ENCODE measurements at regions of chr1 and their contacts with region 1.

Region 1: GRCh38 chr1:1115786-1116700 is at the start of gene C1orf159:
- DNase-seq: peak; percentile 98
- H3K4me3 Mint-ChIP-seq: peak within 1 kb of the TSS; percentile 87
- H3K27ac Mint-ChIP-seq: peak within 1 kb of the TSS; percentile 83
- H3K4me1 Mint-ChIP-seq: no peaks in the 10 kb centered on the region
- H3K27me3 Mint-ChIP-seq: peaks cover 8% of the 10 kb centered on the region
- total RNA-seq, gene C1orf159: 30.0 and 30.3 TPM in 2 replicates

Region 2: DNA sequence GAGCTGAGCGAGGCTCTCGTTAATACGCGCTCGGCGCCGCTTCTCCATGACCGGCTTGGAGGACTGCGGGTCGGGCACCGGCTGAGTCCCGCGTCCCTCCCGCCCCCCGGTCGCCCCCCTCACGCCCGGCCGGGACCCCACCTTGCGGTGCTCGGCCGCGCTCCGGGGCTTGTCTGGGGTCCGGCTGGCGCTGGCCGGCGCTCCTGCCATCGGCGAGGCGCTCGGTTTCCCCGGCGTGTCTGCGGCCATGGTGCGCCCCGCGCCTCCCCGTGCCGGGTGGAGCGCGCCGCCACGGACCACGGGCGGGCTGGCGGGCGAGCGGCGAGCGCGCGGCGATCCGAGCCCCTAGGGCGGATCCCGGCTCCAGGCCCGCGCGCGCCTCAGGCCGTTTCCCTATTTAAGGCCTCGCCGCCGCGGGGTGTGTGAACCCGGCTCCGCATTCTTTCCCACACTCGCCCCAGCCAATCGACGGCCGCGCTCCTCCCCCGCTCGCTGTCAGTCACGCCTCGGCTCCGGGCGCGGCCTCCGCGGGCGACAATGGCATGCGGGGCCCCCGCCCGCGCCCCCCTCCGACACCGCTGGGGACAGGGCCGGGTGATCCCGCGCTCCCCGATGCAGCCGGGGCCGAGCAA is 116.2 kb before region 1 on chr1 and contains the start of gene HES4:
- intact Hi-C with region 1: loop called (anchors 1 kb)
- DNase-seq: peak; percentile 45
- H3K4me3 Mint-ChIP-seq: peak within 1 kb of the TSS; percentile 66
- H3K27ac Mint-ChIP-seq: peak within 1 kb of the TSS; percentile 78
- H3K4me1 Mint-ChIP-seq: peaks cover 5% of the 10 kb centered on the region
- H3K27me3 Mint-ChIP-seq: peaks cover 33% of the 10 kb centered on the region
- total RNA-seq, gene HES4: 1.8 and 2.9 TPM in 2 replicates

Region 3: DNA sequence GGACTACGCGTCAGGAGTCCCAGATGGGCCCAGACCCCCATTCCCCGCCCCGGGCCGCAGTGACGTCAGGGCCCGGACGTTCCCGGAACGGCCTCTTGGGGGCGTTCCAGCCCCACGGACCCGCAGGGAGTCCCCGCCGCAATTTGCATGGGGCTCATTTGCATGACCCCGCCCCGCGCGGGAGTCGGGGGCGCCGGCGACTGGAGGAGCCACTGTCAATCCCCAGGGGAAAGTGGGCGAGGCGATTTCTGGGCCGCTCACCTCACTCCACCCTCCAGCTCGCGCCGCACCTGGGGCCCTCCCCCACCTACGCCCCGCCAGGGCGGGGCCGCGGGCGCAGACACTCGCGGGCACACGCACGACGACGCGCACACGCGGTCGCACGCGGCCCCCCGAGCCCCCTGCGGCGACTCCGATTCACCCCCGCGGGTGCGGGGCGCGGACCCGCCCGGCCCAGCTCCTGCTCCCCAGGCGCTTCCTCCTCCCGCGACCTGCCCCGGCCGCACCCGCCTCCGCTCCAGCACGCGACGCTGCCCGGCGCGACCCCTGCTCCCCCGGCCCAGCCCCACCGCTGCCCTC is 82.9 kb before region 1 on chr1:
- intact Hi-C with region 1: loop called (anchors 1 kb)
- DNase-seq: peak; percentile 84
- H3K4me3 Mint-ChIP-seq: peak overlapping the region; percentile 37
- H3K27ac Mint-ChIP-seq: no peak overlapping the region
- H3K4me1 Mint-ChIP-seq: no peaks in the 10 kb centered on the region
- H3K27me3 Mint-ChIP-seq: peaks cover 14% of the 10 kb centered on the region

Region 4: GRCh38 chr1:1137256-1138045 is 21.4 kb after region 1 on chr1:
- intact Hi-C with region 1: loop called (anchors 2 kb)
- DNase-seq: peak; percentile 77
- H3K4me3 Mint-ChIP-seq: peak overlapping the region; percentile 57
- H3K27ac Mint-ChIP-seq: peak overlapping the region; percentile 89
- H3K4me1 Mint-ChIP-seq: peaks cover 14% of the 10 kb centered on the region
- H3K27me3 Mint-ChIP-seq: no peaks in the 10 kb centered on the region

Region 5: DNA sequence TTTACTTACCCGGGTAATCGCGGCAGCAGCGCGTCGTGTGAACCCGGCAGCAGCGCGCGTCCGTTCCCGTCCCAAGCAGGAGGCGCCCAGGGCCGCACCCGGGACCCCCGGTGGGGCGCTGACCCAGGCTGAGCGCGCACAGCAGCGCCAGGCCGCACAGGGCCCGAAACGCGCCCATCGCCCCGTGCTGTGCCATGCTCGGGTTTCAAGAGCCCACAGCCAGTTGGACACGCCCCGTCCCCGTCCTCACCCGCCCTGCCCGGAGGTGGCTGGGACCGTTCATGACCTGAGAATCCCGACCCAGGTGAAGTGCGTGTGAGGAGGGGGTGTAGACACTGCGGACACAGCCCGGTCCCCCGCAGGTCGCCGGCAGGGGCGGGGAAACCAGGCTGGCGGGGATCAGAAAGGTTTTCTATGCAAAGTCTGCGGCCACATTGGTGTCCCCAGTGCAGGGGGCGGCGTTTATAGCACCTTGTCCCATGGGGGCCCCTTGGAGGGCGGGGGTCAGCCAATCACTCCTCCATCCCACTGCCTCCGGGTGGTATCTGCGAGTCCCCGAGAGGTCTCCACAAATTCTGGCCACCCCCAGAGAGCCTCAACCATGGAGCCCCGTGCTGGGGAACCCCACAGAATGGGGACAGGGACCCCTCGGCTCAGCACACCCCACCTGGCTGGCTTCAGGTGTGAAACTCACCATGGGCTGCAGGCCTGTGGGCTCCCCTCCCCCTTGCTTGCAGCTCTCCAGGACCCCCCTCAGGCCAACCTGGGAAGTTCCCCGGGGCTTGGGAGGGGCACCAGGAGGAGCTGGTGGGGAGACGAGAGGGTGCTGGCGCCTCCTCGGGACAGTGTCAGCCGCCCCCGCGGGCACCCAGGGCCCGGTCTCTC is 90.6 kb after region 1 on chr1 and contains the start of gene TNFRSF18:
- intact Hi-C with region 1: loop called (anchors 1 kb)
- DNase-seq: peak; percentile 47
- H3K4me3 Mint-ChIP-seq: peak within 1 kb of the TSS; percentile 86
- H3K27ac Mint-ChIP-seq: peak within 1 kb of the TSS; percentile 99
- H3K4me1 Mint-ChIP-seq: peaks cover 24% of the 10 kb centered on the region
- H3K27me3 Mint-ChIP-seq: no peaks in the 10 kb centered on the region
- total RNA-seq, gene TNFRSF18: 350 and 356 TPM in 2 replicates

Region 6: DNA sequence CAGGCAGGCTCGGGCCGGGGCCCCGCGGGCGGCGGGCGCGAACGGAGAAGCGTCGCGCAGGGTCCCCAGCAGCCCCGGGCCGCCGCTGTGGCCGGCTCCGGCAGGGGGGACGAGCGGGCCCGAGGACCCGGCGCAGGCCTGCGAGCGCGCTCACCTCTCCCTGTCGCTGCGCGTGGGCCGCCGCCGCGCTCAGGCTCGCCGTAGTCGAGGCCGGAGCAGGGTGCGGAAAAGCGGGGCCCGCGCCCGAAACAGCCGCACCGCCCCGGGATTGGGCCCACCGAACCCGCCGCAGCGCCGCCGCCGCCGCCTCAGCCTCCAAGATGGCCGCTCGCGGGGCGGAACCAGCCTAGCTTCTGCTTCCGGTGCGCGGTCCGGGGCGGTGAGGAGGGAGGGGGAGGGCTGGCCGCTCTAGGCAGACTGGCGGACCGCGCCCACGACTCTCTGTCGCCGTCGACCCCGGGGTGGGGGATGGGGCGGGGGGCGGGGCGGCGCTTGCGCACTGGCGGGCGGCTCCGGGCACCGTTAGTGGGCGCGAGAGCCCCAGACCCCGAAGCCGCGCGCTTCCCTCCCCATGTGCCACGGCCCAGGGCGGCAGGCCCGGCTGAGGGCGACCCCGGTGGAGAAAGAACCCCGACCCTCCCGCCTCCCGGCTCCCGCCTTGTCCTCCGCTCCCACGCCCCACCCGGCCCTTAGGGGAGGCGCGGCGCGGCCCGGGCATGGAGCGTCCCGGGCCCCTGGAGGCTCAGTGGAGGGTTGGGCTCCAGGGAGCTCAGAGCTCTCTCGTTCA is 157.7 kb after region 1 on chr1 and contains the start of gene UBE2J2:
- intact Hi-C with region 1: loop called (anchors 1 kb)
- DNase-seq: peak; percentile 86
- H3K4me3 Mint-ChIP-seq: peak within 1 kb of the TSS; percentile 90
- H3K27ac Mint-ChIP-seq: peak within 1 kb of the TSS; percentile 63
- H3K4me1 Mint-ChIP-seq: peaks cover 40% of the 10 kb centered on the region
- H3K27me3 Mint-ChIP-seq: no peaks in the 10 kb centered on the region
- total RNA-seq, gene UBE2J2: 95.6 and 99.5 TPM in 2 replicates

Region 7: DNA sequence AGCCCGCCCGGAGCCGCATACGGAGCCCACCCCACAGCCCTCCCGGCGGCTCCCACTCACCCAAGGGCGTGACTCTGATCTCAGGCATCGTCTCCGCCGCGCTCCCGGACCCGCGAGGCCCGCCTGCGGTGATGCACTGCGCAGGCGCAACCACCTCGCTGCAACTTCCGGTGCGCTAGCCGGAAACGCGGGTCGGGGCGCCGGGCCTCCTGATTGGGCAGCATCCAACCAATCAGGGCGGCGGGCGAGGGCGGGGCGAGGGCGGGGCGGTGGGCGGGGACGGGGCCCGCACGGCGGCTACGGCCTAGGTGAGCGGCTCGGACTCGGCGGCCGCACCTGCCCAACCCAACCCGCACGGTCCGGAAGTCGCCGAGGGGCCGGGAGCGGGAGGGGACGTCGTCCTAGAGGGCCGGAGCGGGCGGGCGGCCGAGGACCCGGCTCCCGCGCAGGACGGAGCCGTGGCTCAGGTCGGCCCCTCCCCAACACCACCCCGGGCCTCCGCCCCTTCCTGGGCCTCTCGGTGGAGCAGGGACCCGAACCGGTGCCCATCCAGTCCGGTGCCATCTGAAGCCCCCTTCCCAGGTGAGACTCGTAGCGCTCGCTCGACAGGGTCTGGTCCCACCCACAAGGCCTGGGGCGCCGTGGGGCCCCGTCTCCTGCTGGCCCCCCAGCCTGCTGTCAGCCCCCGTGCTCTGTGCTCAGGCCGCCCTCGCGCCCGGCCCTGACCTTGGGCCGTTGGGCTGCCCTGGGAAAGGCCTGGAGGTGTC is 208.7 kb after region 1 on chr1 and contains the starts of genes CPTP and INTS11:
- intact Hi-C with region 1: loop called (anchors 1 kb)
- DNase-seq: peak; percentile 95
- H3K4me3 Mint-ChIP-seq: peak within 1 kb of the TSS; percentile 95
- H3K27ac Mint-ChIP-seq: peak within 1 kb of the TSS; percentile 92
- H3K4me1 Mint-ChIP-seq: peaks cover 20% of the 10 kb centered on the region
- H3K27me3 Mint-ChIP-seq: no peaks in the 10 kb centered on the region
- total RNA-seq, gene CPTP: 13.6 and 14.6 TPM in 2 replicates
- total RNA-seq, gene INTS11: 144 and 147 TPM in 2 replicates

Measured in activated T-helper 1 cell treated with anti-CD3 and anti-CD28 coated beads, Interleukin-12 subunit alpha, Interleukin-12 subunit beta, Interleukin-2, Interleukin-4 antibody, amounts not matched to agents 30 ng/mL and 10 ng/mL and 1 ng/mL, durations not matched to agents 14 hours and 24 hours and 36 hours (primary cell).